Pancreas (tissue), 10 donors: ENCODE measurements at regions of chr11 and their contacts with region 1.

Region 1: DNA sequence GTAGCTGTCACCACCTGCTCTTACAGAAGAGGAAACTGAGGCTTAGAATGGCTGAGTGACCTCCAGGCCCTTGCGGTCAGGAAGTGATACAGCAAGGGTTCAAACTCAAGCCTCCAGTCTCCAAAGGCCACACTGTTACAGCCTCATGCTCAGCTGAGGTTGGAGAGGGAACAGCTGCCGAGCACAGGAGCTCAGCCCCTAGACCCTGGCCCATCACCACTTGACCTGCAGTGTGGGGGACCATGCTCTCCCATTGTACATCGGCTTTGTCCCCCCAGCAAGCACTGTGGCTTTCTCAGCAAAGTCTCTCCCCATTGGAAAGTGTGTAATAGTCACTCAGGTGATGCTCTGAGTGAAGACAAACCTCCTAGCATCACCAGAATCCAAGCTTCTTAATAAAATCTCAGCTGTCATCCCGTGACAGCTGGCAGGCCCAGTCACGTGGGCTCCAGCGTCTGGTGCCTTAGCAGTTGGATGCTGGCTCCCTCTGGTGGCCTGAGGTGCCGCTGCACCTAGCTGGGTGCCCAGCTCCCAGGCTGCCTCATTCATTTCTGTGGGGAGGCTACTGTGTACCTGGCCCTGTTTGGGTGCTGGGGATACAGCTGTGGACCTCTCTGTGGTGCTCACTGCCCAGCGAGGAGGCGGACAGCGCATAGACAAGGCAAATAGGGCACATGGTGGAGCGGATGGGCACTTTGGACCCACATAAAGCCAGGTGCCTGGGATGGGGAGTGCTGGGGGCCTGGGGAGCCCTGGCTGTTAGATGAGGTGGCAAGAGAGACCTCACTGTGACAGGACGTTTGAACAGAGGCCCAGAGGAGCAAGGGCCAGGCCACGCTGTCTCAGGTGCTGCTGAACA is 19.1 kb upstream of the MYRF start:
- DNase-seq: peak; percentile 76 to 94 (median 90)
- ATAC-seq: peak; percentile 73 to 94 (median 90)
- H3K4me3 ChIP-seq: no peak overlapping the region
- H3K27ac ChIP-seq: no peak overlapping the region
- H3K4me1 ChIP-seq: peaks cover 0 to 19% (median 5%) of the 10 kb centered on the region in 3 donors
- H3K27me3 ChIP-seq: no peaks in the 10 kb centered on the region
- CTCF ChIP-seq: peak; percentile 96 to 100 (median 99)

Region 2: GRCh38 chr11:61495801-61496597 is 237.3 kb before region 1 on chr11:
- intact Hi-C with region 1: no loop called
- DNase-seq: peak in 1 of 6 donors; percentile 50
- ATAC-seq: peak in 2 of 4 donors; percentile 73 to 79
- H3K4me3 ChIP-seq: no peak overlapping the region
- H3K27ac ChIP-seq: peak overlapping the region in 1 of 4 donors; percentile 22
- H3K4me1 ChIP-seq: no peaks in the 10 kb centered on the region
- H3K27me3 ChIP-seq: no peaks in the 10 kb centered on the region
- CTCF ChIP-seq: no peak

Region 3: DNA sequence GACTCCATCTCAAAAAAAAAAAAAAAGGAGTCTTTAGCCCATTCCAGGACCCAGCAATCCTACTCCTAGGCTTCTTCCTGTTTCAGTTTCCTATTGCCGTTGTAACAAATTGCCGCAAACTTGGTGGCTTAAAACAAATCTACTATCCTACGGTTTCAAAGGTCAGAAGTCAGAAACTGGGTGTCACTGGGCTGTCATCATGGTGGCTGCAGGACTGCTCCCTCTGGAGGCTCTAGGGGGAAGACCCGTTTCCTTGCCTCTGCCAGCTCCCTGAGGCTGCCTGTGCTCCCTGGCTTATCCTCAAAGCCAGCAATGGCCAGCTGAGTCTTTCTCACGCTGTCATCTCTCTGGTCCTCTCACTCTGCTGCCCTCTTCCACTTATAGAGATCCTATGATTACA is 61.8 kb before region 1 on chr11:
- intact Hi-C with region 1: loop called in 1 of 3 experiments (anchors 5 kb)
- DNase-seq: peak in 5 of 6 donors; percentile 73 to 84 (median 80)
- ATAC-seq: peak; percentile 63 to 80 (median 80)
- H3K4me3 ChIP-seq: no peak overlapping the region
- H3K27ac ChIP-seq: no peak overlapping the region
- H3K4me1 ChIP-seq: peaks cover 3 to 15% (median 12%) of the 10 kb centered on the region in 3 donors
- H3K27me3 ChIP-seq: no peaks in the 10 kb centered on the region
- CTCF ChIP-seq: peak; percentile 26 to 55 (median 41)

Region 4: GRCh38 chr11:61679893-61680621 is 53.3 kb before region 1 on chr11 and contains the start of gene DAGLA:
- intact Hi-C with region 1: loop called in 1 of 3 experiments (anchors 10 kb)
- DNase-seq: peak; percentile 61 to 96 (median 88)
- ATAC-seq: peak; percentile 74 to 86 (median 80)
- H3K4me3 ChIP-seq: peak within 1 kb of the TSS; percentile 33 to 61 (median 54)
- H3K27ac ChIP-seq: peak within 1 kb of the TSS in 1 of 4 donors; percentile 46
- H3K4me1 ChIP-seq: peaks cover 13 to 22% (median 21%) of the 10 kb centered on the region in 3 donors
- H3K27me3 ChIP-seq: no peaks in the 10 kb centered on the region
- CTCF ChIP-seq: peak; percentile 97 to 99 (median 98)
- total RNA-seq, gene DAGLA: 3.7 to 6.2 (median 4.8) TPM